MCF 10A (cell line): ENCODE measurements at regions of chr18 and their contacts with region 1.

Region 1: GRCh38 chr18:58541789-58542425 is 87.0 kb downstream of the ALPK2 start:
- DNase-seq: peak; percentile 95
- H3K4me3 Mint-ChIP-seq: no peak overlapping the region
- H3K27ac Mint-ChIP-seq: peak overlapping the region; percentile 85
- H3K4me1 Mint-ChIP-seq: peaks cover 33% of the 10 kb centered on the region
- H3K27me3 Mint-ChIP-seq: no peaks in the 10 kb centered on the region
- CTCF ChIP-seq: no peak

Region 2: GRCh38 chr18:58529714-58530354 is 12.1 kb before region 1 on chr18:
- CTCF ChIA-PET with region 1: interaction called, 28 read pairs
- POLR2A ChIA-PET with region 1: interaction called, 8 read pairs
- intact Hi-C with region 1: no loop called
- DNase-seq: peak; percentile 70
- H3K4me3 Mint-ChIP-seq: no peak overlapping the region
- H3K27ac Mint-ChIP-seq: no peak overlapping the region
- H3K4me1 Mint-ChIP-seq: no peaks in the 10 kb centered on the region
- H3K27me3 Mint-ChIP-seq: no peaks in the 10 kb centered on the region
- CTCF ChIP-seq: peak; percentile 91

Region 3: GRCh38 chr18:58567453-58568196 is 25.7 kb after region 1 on chr18:
- CTCF ChIA-PET with region 1: no interaction called
- POLR2A ChIA-PET with region 1: interaction called, 7 read pairs
- intact Hi-C with region 1: loop called (anchors 1 kb)
- DNase-seq: peak; percentile 96
- H3K4me3 Mint-ChIP-seq: no peak overlapping the region
- H3K27ac Mint-ChIP-seq: peak overlapping the region; percentile 91
- H3K4me1 Mint-ChIP-seq: peaks cover 25% of the 10 kb centered on the region
- H3K27me3 Mint-ChIP-seq: no peaks in the 10 kb centered on the region
- CTCF ChIP-seq: no peak

Region 4: DNA sequence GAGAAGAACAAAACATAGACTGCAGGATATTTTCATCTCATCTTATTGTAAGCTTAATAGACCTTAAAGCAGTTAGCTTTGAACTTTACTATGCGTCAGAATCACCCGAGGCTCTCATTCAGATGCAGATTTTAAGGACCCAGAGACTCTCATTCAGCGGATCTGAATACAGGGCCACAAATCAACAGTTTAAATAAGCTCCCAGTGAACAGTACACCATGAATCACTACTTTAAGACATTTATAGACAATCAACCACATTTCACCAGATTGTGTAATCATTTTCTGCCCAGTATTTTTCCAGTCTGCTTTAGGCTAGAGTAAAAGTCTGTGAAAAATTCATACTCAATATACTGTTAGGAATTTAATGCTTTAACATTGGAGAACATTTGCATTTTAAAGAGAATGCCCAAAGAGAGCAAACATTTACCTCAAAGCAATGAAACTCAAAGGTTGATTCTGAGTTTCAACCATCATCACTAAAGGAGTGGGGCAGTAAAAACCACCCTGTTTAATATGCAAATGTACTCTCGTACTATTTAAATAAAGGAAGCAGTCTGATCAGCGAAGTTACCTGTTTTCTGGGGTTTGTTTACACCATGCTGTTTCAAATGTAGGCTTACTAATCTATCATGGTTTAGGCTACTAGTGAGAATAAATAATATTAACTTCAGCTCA is 98.0 kb after region 1 on chr18:
- CTCF ChIA-PET with region 1: interaction called, 3 read pairs
- POLR2A ChIA-PET with region 1: interaction called, 12 read pairs
- intact Hi-C with region 1: no loop called
- DNase-seq: peak; percentile 81
- H3K4me3 Mint-ChIP-seq: peak overlapping the region; percentile 10
- H3K27ac Mint-ChIP-seq: no peak overlapping the region
- H3K4me1 Mint-ChIP-seq: peaks cover 10% of the 10 kb centered on the region
- H3K27me3 Mint-ChIP-seq: no peaks in the 10 kb centered on the region
- CTCF ChIP-seq: no peak

Region 5: DNA sequence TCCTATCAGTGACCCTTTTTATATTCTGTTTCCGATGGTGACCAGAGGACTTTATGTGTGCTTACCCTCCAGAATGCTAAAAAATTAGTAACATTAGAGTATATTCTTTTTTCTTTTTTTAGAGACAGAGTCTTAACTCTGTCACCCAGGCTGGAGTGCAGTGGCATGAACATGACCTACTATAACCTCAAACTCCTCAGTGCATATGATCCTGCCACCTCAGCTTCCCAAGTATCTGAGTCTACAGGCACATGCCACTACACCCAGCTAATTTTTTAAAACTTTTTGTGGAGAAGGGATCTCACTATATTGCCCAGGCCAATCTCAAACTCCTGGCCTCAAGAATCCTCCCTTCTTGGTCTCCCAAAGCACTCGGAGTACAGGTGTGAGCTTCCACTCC is 204.0 kb after region 1 on chr18:
- CTCF ChIA-PET with region 1: no interaction called
- POLR2A ChIA-PET with region 1: no interaction called
- intact Hi-C with region 1: no loop called
- DNase-seq: no peak
- H3K4me3 Mint-ChIP-seq: no peak overlapping the region
- H3K27ac Mint-ChIP-seq: no peak overlapping the region
- H3K4me1 Mint-ChIP-seq: no peaks in the 10 kb centered on the region
- H3K27me3 Mint-ChIP-seq: no peaks in the 10 kb centered on the region
- CTCF ChIP-seq: no peak

Region 6: GRCh38 chr18:58761241-58761969 is 219.5 kb after region 1 on chr18:
- CTCF ChIA-PET with region 1: interaction called, 10 read pairs
- POLR2A ChIA-PET with region 1: no interaction called
- intact Hi-C with region 1: no loop called
- DNase-seq: no peak
- H3K4me3 Mint-ChIP-seq: no peak overlapping the region
- H3K27ac Mint-ChIP-seq: no peak overlapping the region
- H3K4me1 Mint-ChIP-seq: no peaks in the 10 kb centered on the region
- H3K27me3 Mint-ChIP-seq: peaks cover 20% of the 10 kb centered on the region
- CTCF ChIP-seq: no peak